ENCODE measurements at regions of chr12 and their contacts with region 1.

Region 1: GRCh38 chr12:50986966-50987737 is 34.8 kb downstream of the HIGD1C start:
- DNase-seq: peak; percentile 47 to 69 (median 52)
- ATAC-seq: peak; percentile 84
- H3K4me3 ChIP-seq: no peak overlapping the region
- H3K27ac ChIP-seq: peak overlapping the region in 1 of 4 donors; percentile 4
- H3K4me1 ChIP-seq: no peaks in the 10 kb centered on the region
- H3K27me3 ChIP-seq: no peaks in the 10 kb centered on the region
- CTCF ChIP-seq: peak in 6 of 7 experiments; percentile 11 to 63 (median 55)
- POLR2A ChIP-seq: no peak

Region 2: GRCh38 chr12:50839042-50839441 is 148.1 kb before region 1 on chr12:
- intact Hi-C with region 1: loop called (anchors 10 kb)
- DNase-seq: no peak
- ATAC-seq: no peak
- H3K4me3 ChIP-seq: no peak overlapping the region
- H3K27ac ChIP-seq: no peak overlapping the region
- H3K4me1 ChIP-seq: no peaks in the 10 kb centered on the region
- H3K27me3 ChIP-seq: no peaks in the 10 kb centered on the region
- CTCF ChIP-seq: no peak
- POLR2A ChIP-seq: no peak

Region 3: DNA sequence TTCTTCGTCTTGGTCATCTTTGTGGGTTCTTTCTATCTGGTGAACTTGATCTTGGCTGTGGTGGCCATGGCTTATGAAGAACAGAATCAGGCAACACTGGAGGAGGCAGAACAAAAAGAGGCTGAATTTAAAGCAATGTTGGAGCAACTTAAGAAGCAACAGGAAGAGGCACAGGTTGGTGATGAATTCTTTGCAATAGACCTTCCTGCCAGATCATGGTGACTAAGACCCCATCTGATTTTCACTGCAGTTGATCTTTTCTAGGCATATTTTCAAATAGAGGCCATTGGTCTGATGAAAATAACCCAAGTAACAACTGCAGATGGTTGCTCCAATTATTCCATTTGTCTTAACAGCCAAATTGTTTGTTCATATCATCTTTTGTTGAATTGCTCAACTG is 718.3 kb after region 1 on chr12:
- intact Hi-C with region 1: no loop called
- DNase-seq: no peak
- ATAC-seq: no peak
- H3K4me3 ChIP-seq: no peak overlapping the region
- H3K27ac ChIP-seq: no peak overlapping the region
- H3K4me1 ChIP-seq: peaks cover 23% of the 10 kb centered on the region
- H3K27me3 ChIP-seq: no peaks in the 10 kb centered on the region
- CTCF ChIP-seq: no peak
- POLR2A ChIP-seq: no peak